ENCODE measurements at regions of chr1 and their contacts with region 1.

Region 1: GRCh38 chr1:47313915-47314664 is at the start of gene STIL:
- DNase-seq: peak; percentile 98 to 100 (median 99)

Region 2: DNA sequence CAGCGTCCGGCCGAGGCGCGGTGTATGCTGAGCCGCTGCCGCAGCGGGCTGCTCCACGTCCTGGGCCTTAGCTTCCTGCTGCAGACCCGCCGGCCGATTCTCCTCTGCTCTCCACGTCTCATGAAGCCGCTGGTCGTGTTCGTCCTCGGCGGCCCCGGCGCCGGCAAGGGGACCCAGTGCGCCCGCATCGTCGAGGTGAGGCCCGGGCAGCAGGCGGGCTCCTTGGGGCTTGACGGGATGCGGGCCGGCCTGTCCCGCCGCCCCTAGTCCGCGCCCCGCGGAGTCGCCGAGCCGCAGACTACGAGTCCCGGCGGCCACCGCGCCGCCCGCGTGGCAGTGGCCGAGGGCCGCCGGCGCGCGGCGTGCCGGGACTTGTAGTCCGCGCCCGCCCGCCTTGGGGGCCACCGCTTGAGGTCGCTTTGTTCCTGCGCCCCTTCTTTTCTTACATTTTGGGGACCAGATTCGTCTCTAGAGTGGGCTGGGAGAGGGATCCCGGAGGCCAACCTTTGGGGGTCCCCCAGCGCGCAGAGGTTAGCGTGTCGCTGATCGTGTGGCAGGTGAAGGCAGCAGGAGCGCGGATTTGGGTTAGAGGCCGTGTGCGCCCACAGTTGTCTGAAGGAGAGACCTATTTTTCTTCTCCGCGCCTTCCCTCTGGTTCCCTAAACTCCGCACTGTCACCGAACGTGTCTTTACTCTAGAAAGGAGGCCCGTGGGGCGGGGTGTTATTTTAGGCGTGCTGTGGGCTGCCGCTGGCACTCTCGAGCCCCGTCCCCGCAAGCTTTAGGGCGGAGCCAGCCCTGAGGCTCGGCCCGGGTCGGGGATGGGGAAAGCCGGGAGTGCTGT is 20.1 kb after region 1 on chr1:
- intact Hi-C with region 1: loop called (anchors 2 kb)
- DNase-seq: peak; percentile 64 to 93 (median 83)

Region 3: DNA sequence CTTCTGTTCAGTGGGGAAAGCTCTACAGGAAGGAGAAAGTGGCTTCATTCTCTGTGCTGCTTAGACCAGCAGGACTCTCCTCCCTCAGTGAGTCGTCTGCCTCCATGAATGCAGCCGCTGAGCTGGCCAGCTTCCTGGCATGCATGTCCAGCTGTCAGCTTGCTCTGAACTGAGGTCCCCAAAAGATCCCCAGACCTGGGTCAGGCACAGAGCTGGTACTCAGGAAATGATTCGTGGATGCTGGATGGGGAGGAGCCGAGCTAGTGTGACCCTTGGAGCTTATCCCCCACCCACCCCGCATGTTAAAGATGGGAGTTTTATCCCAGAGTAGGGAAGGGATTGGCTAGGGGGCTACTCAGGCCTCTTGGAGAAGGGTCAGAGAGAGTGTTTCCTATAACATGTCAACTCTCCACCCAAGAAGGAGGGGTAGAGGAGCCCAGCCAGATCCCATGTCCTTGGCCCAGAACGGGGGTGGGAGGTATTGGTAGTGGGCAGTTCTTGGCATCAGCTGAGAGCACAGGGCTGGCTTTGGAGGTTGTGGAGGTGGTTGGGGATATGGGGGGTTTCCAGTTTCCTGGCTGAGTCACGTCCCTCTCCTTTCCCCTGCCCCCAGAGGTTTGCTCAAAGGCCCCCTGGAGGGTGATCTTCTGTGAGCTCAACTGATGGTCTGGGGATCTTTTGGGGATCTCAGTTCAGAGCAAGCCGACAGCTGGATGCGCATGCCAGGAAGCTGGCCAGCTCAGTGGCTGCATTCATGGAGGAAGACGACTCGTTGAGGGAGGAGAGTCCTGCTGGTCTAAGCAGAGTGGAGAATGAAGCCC is 233.9 kb after region 1 on chr1:
- intact Hi-C with region 1: no loop called
- DNase-seq: no peak

Measured in head of caudate nucleus (tissue), 42 donors.